ENCODE measurements at regions of chr7 and their contacts with region 1.

Region 1: DNA sequence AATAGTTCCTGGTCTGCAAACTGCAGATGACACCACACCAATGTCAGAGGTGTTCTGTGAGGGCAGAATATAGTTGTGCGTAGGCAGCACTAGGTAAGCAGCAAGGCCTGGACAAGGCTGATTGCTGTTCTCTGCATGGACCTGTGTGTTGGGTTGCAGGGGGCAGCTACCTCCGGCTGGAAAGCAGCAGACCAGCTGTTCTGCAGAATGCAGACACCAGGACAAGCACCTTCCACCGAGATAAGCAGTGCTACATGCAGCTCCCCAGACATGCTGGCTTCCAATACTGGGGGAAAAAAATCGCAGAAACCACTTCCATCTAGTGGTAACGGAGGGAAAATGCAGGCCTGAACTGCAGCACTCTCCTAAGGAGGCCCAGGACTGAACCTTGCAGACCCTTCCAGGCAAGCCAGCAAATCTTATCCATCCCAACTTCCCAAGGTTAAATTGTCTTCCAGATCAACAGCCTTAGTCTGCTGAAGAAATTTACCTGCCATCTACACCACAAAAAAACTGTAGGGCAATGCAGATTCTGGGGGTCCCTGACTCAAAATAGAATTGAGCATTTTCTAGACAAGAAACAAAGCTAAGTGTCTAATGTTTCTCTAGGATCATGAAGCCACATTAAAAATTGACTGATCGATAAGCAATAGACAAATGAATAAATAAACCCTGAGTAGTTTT is 50.5 kb upstream of the COBL start:
- DNase-seq: peak; percentile 59 to 60
- H3K4me3 ChIP-seq: no peak overlapping the region
- H3K4me1 ChIP-seq: no peaks in the 10 kb centered on the region
- H3K27me3 ChIP-seq: no peaks in the 10 kb centered on the region

Region 2: DNA sequence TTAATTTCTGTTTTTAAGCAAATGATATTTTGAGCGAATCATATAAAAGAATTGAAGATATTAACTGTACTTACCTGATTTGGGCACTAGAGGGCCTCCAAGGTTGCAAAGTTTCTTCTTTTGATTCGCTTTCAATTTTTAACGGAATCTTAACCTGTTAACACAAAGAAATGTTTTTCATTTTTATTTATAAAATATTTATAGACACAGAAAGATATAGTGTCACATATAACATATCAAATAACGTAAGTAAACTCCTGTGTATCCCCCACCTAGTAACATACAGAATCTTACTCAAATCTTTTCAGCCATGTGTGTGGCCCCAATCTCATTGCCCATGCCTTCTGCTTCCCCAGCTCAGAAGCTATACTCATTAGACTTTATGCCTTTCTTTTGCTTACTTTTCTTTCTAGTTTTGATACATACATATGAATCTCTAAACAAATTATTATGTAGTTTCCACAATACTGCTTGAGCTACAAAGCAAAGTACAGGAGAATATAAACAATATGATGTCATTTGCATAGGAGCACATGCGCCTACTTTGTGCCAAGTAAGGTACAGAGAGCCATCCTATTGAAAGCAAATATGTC is 1224.6 kb before region 1 on chr7:
- in situ Hi-C with region 1: loop called (anchors 25 kb)
- DNase-seq: peak; percentile 20 to 23
- H3K4me3 ChIP-seq: no peak overlapping the region
- H3K4me1 ChIP-seq: no peaks in the 10 kb centered on the region
- H3K27me3 ChIP-seq: no peaks in the 10 kb centered on the region

Region 3: DNA sequence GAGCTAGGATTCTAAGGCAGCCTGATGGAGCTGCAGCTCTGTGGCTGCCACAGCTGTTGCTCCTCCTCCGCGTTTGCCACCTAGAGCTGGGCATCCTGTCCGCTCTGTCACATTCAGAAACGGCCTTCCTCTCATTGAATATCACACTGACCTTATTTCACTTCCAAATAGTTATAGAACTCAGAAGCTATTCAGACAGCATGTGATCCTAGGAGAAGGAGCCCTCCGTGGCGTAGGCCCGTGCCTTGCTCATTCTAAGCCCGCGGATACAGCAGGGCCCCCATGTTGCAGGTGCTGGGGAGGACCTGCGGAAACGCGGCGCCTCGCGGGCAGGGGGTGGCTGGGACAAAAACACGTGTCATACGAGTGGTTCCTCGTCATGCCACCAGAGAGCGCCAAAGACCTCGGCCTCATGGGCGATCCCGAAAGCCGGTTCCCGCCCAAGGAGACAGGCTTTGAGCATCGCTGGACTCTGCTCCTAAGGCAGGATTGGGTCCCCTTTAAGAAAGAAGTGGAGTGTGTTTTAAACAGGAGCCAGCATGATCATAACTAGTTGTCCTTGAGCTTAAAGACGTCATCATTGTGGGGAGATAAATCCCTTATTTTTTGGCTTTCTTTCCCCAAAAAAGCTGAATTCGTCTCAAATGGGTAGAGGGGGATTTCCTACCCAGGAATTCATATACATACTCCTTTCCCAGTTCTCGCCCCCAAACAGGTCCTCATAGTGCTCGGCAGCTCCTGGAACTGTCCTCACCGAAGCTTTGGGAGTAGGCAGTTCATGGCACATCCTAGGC is 899.1 kb before region 1 on chr7:
- in situ Hi-C with region 1: loop called (anchors 25 kb)
- DNase-seq: peak; percentile 69 to 87
- H3K4me3 ChIP-seq: no peak overlapping the region
- H3K4me1 ChIP-seq: peaks cover 4% of the 10 kb centered on the region
- H3K27me3 ChIP-seq: no peaks in the 10 kb centered on the region

Region 4: GRCh38 chr7:50937727-50938126 is 429.3 kb before region 1 on chr7:
- in situ Hi-C with region 1: no loop called
- DNase-seq: no peak
- H3K4me3 ChIP-seq: no peak overlapping the region
- H3K4me1 ChIP-seq: no peaks in the 10 kb centered on the region
- H3K27me3 ChIP-seq: no peaks in the 10 kb centered on the region

Region 5: DNA sequence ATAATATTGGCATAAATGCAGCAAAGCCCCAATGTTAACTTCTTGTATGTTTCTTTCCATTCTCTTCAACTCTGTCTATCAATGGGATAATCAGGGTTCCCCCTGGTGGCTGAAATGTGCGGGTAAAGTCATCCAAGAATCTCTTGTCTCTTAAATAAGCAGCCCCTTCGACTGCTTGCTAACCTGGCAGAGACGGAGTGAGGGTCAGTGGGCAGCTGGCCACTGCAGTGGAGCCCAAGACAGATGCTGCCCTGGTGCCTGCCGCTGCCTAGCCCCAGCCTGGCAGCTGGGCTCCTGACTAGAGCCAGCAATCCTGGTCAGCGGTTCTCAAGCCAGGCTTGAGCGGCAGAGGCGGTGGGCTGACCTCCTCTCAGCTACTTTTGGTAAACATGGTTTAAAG is 299.3 kb before region 1 on chr7:
- in situ Hi-C with region 1: no loop called
- DNase-seq: peak; percentile 68 to 80
- H3K4me3 ChIP-seq: no peak overlapping the region
- H3K4me1 ChIP-seq: peaks cover 18% of the 10 kb centered on the region
- H3K27me3 ChIP-seq: no peaks in the 10 kb centered on the region

Region 6: GRCh38 chr7:51162724-51163329 is 204.2 kb before region 1 on chr7:
- in situ Hi-C with region 1: loop called (anchors 5 kb)
- DNase-seq: peak; percentile 76 to 91
- H3K4me3 ChIP-seq: no peak overlapping the region
- H3K4me1 ChIP-seq: peaks cover 7% of the 10 kb centered on the region
- H3K27me3 ChIP-seq: no peaks in the 10 kb centered on the region

Measured in HAP-1 (cell line).